ENCODE measurements at regions of chr2 and their contacts with region 1.

Region 1: GRCh38 chr2:12716282-12717190 is at the start of gene TRIB2:
- DNase-seq: peak; percentile 94
- total RNA-seq, gene TRIB2: 29.4 to 34.5 TPM

Region 2: GRCh38 chr2:11863513-11864328 is 852.8 kb before region 1 on chr2:
- intact Hi-C with region 1: loop called in 1 of 2 experiments (anchors 10 kb)
- DNase-seq: peak; percentile 94

Region 3: DNA sequence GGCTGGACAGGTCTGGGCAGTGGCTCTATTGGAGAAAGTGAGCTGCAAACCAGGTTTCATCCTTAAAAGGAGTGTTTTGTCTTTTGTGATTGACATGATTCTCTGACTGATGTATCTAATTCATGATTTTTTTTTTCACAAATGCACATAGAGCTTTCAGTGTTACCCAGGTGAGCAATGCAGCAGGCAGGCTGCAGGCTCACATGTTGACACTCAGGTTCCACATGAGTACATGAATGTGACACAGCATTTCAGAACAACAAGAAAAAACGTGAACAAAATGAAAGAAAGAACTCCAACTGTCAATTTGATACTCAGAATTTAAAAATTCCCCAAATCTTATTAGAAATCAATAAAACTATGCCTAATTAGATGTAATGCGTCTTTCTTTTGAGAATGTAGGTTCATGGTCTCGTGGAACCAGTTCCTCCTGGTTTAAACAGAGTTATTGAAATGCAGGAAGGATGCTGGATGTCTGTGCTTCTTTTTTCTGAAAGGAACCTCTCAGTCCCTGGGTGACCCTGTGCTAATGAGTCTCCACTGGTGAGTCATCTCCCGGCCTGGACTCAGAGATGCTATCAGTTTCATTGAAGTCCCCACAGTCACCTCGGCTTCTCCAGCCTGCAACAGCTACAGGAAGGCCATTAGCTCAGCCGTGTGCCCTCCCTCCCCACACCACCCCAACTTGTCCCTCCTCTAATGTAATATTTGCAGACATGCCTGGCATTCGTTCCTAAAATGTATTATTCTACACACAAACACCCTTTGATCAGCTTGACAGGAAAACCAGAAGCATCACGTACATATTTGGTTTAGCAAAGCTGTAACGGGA is 539.7 kb before region 1 on chr2:
- intact Hi-C with region 1: loop called in 1 of 2 experiments (anchors 10 kb)
- DNase-seq: no peak

Region 4: GRCh38 chr2:12212841-12213597 is 503.5 kb before region 1 on chr2:
- intact Hi-C with region 1: no loop called
- DNase-seq: no peak

Region 5: DNA sequence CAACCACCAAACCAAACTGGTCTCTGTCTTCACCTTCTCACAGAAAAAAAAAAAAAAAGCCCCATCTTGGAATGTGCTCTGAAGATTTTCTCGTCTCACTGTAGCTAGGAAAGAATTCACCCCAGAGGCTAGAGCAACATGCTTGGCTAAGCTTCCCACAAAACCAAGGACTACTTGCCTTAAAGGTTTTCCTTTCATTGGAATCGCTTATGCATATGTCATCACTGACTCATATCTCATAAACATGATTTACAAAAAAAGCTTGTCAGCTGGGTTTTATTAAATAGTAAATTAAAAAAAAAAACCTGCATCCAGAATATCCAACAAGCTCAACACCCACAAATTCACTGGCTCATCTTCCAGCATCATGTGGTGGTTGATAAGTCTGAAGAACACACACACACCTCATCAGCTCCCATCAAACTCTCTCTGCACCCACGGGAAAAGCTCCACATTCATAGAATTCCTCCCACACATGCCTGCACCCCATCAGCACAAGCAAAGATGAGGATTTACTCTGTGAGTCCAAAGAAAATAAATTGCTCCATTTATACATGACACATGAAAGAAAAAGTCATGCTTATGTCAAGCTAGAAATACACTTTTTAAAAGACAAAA is 181.8 kb before region 1 on chr2:
- intact Hi-C with region 1: loop called in 1 of 2 experiments (anchors 10 kb)
- DNase-seq: no peak

Region 6: DNA sequence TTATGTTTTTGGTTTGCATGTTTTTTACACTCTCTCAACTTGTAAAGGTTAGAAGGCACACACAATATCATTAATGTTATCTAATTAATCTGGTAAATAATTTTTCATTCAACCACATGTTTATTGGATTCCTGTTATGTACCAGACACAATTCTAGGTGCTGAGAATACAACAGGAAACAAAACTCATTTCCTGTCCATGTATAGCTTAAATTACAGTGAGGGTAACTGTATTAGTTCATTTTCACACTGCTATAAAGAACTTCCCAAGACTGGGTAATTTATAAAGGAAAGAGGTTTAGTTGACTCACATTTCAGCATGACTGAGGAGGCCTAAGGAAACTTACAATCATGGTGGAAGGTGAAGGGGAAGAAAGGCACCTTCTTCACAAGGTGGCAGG is 270.7 kb after region 1 on chr2:
- intact Hi-C with region 1: loop called in 1 of 2 experiments (anchors 5 kb)
- DNase-seq: no peak